ENCODE measurements at regions of chr20 and their contacts with region 1.

Region 1: DNA sequence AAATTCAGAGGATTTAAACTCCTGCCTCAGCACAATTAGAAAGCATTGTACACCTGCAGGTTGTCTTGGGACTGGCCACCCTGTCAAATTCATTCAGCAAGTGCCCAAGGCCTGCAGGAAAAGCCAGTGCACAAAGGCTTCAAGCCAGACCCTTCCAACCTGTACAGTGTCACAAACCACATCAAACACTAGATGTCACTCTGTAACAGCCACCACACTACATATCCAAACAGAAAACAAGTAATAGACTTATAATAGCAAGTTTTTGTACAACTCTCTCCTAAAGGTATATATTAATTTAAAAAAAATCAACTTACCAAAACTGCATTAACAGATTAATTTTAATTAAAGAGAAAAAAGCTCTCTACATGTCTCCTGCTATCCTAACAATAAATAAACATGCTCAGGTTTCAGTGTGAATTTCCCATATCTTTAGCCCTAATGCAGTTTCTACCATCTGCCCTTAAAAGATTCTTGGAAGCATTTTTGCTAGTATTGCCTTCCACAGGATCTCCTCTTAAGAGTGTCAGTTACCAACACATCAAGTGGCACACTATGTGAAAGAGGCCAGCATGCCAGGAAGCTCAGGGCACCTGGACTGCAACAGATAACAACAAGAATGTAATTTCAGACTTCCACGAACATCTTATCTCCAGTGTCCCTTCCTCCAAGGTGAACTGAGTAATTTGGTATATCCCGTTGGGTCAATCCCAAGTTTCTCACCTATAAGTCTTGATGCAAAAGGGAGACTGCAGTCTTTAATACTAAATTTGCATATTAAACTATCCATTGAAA is 47.5 kb downstream of the RALGAPA2 start:
- DNase-seq: peak; percentile 41
- H3K4me3 ChIP-seq: no peak overlapping the region
- H3K27ac ChIP-seq: no peak overlapping the region
- H3K4me1 ChIP-seq: peaks cover 16% of the 10 kb centered on the region
- CTCF ChIP-seq: peak; percentile 78

Region 2: GRCh38 chr20:20712474-20713243 is 47.7 kb after region 1 on chr20 and contains the start of gene RALGAPA2:
- CTCF ChIA-PET with region 1: no interaction called
- POLR2A ChIA-PET with region 1: no interaction called
- intact Hi-C with region 1: loop called (anchors 5 kb)
- DNase-seq: peak; percentile 97
- H3K4me3 ChIP-seq: peak within 1 kb of the TSS; percentile 98
- H3K27ac ChIP-seq: peak within 1 kb of the TSS; percentile 42
- H3K4me1 ChIP-seq: peaks cover 19% of the 10 kb centered on the region
- CTCF ChIP-seq: no peak
- total RNA-seq, gene RALGAPA2: 9.1 TPM in 2 replicates

Region 3: DNA sequence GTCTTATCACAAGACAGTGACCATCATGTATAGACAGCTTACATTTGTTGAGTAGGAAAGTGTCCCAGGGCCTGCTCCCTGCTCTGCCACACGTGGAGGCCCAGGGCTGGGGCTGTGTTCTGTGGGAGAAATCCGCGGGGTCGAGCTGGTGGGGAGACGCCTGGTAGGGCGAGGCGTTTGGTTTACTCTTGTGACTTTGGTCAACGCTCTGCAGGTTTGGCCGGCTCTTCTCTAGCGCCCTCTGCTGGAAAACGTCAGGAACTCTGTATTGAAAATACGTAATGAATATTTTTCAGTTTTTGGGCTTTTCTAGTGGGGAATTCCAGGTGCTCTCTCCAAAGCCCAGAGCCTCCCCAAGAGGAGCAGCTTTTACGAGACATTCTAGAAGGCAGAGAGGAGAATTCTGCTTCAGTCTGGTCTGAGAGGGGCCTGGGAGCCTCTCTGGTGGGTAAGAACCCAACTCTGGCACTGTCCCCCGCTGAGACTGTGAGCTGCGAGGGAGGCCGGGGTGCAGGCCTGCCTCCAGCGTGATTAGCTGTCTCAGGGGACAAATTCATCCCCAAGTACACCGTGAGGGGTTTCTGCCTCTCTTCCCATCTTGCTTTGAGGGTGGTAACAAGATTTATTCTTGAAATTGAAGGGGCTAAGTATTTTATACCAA is 160.1 kb after region 1 on chr20:
- CTCF ChIA-PET with region 1: no interaction called
- POLR2A ChIA-PET with region 1: no interaction called
- intact Hi-C with region 1: loop called (anchors 1 kb)
- DNase-seq: peak; percentile 44
- H3K4me3 ChIP-seq: no peak overlapping the region
- H3K27ac ChIP-seq: no peak overlapping the region
- H3K4me1 ChIP-seq: no peaks in the 10 kb centered on the region
- CTCF ChIP-seq: peak; percentile 82

Measured in OCI-LY7 (cell line).